ENCODE measurements at regions of chr10 and their contacts with region 1.

Region 1: DNA sequence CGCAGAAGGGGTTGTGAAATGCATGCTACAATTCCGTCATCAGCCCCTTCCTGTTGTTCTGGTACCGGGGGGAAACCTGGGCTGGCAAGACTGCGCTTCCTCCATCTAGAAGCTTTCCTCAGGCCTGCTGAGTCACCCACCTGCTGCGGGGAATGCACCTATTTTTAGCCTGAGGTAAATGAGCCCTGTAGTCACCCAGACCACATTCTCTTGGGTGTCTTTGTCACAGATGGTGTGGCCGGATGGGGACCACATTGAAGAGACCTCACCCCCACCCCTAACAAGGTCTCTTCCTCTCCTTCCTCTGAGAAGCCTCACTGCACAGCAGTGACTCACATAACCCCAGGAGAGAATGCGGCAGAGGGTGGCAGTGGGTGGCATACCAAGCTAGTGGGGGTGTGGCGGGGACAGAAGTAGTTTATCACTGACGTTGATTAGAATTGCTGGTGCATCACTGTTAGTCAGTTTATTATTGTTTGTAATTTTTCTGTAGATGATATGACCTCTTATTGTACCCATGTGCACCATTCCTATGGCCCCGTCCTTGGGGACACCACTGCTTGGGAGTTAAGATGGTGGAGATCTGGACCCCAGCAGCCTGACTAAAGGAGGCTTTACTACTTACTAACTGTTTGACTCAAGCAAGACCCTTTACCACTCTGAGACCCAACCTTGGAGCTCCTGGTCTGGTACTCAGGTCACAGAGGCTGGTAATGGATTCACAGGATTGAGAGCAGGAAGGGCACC is 83.0 kb upstream of the DUSP5 start:
- DNase-seq: peak; percentile 98
- ATAC-seq: peak; percentile 93
- H3K4me3 Mint-ChIP-seq: peak overlapping the region; percentile 7
- H3K27ac Mint-ChIP-seq: peak overlapping the region; percentile 85
- H3K4me1 Mint-ChIP-seq: peaks cover 77% of the 10 kb centered on the region
- H3K27me3 Mint-ChIP-seq: no peaks in the 10 kb centered on the region

Region 2: GRCh38 chr10:110137142-110137545 is 277.6 kb before region 1 on chr10:
- CTCF ChIA-PET with region 1: no interaction called
- DNase-seq: no peak
- ATAC-seq: peak; percentile 72
- H3K4me3 Mint-ChIP-seq: no peak overlapping the region
- H3K27ac Mint-ChIP-seq: peak overlapping the region; percentile 25
- H3K4me1 Mint-ChIP-seq: peaks cover 28% of the 10 kb centered on the region
- H3K27me3 Mint-ChIP-seq: no peaks in the 10 kb centered on the region

Region 3: GRCh38 chr10:110425684-110426293 is 11.1 kb after region 1 on chr10:
- CTCF ChIA-PET with region 1: interaction called, 27 read pairs
- DNase-seq: peak; percentile 92
- ATAC-seq: peak; percentile 91
- H3K4me3 Mint-ChIP-seq: peak overlapping the region; percentile 4
- H3K27ac Mint-ChIP-seq: peak overlapping the region; percentile 87
- H3K4me1 Mint-ChIP-seq: peaks cover 91% of the 10 kb centered on the region
- H3K27me3 Mint-ChIP-seq: no peaks in the 10 kb centered on the region

Region 4: GRCh38 chr10:110497438-110498086 is 82.8 kb after region 1 on chr10 and contains the start of gene DUSP5:
- CTCF ChIA-PET with region 1: interaction called, 19 read pairs
- DNase-seq: peak; percentile 96
- ATAC-seq: peak; percentile 67
- H3K4me3 Mint-ChIP-seq: peak within 1 kb of the TSS; percentile 99
- H3K27ac Mint-ChIP-seq: peak within 1 kb of the TSS; percentile 97
- H3K4me1 Mint-ChIP-seq: peaks cover 52% of the 10 kb centered on the region
- H3K27me3 Mint-ChIP-seq: no peaks in the 10 kb centered on the region
- total RNA-seq, gene DUSP5: 102 to 223 TPM